AG04450 (cell line): ENCODE measurements at regions of chr3 and their contacts with region 1.

Region 1: GRCh38 chr3:141386611-141387111 is 18.4 kb downstream of the ZBTB38 start:
- DNase-seq: no peak
- H3K4me3 ChIP-seq: peak overlapping the region; percentile 68
- H3K27ac ChIP-seq: peak overlapping the region; percentile 83
- H3K27me3 ChIP-seq: no peaks in the 10 kb centered on the region
- CTCF ChIP-seq: no peak

Region 2: GRCh38 chr3:141311496-141312353 is 74.9 kb before region 1 on chr3:
- CTCF ChIA-PET with region 1: interaction called, 19 read pairs
- POLR2A ChIA-PET with region 1: interaction called, 16 read pairs
- DNase-seq: peak; percentile 95
- H3K4me3 ChIP-seq: peak overlapping the region; percentile 90
- H3K27ac ChIP-seq: peak overlapping the region; percentile 65
- H3K27me3 ChIP-seq: no peaks in the 10 kb centered on the region
- CTCF ChIP-seq: peak; percentile 76

Region 3: DNA sequence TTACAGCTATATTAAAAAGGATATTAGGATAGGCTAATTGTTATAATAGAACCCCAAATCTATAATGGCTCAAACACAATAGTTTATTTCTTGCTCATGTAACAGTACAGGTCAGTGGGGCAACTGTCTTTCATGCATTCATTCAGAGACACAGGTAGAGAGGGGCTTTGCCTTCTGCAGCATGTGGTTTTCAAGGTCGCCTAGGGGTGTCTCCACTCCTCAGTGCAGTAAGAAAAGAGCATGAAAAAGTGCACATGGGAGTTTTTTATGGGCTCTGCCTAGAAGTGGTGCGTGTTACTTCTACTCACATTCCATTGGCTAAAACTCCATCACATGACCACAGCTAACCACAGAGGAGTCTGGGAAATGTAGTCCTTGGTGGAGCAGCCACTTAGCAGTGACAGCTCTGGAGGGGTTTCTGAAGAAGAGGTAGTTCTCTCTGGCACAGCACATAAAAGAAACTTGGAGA is 16.6 kb before region 1 on chr3:
- CTCF ChIA-PET with region 1: interaction called, 8 read pairs
- POLR2A ChIA-PET with region 1: interaction called, 66 read pairs
- DNase-seq: no peak
- H3K4me3 ChIP-seq: no peak overlapping the region; the same call in 1 of the 2 replicates
- H3K27ac ChIP-seq: no peak overlapping the region
- H3K27me3 ChIP-seq: no peaks in the 10 kb centered on the region
- CTCF ChIP-seq: peak; percentile 37

Region 4: GRCh38 chr3:141412087-141412935 is 25.6 kb after region 1 on chr3:
- CTCF ChIA-PET with region 1: no interaction called
- POLR2A ChIA-PET with region 1: interaction called, 38 read pairs
- DNase-seq: peak; percentile 76
- H3K4me3 ChIP-seq: peak overlapping the region; percentile 24; the same call in 1 of the 2 replicates
- H3K27ac ChIP-seq: peak overlapping the region; percentile 94
- H3K27me3 ChIP-seq: no peaks in the 10 kb centered on the region
- CTCF ChIP-seq: no peak

Region 5: GRCh38 chr3:141441381-141442364 is 55.0 kb after region 1 on chr3:
- CTCF ChIA-PET with region 1: no interaction called
- POLR2A ChIA-PET with region 1: interaction called, 14 read pairs
- DNase-seq: peak; percentile 67
- H3K4me3 ChIP-seq: no peak overlapping the region
- H3K27ac ChIP-seq: peak overlapping the region; percentile 83
- H3K27me3 ChIP-seq: no peaks in the 10 kb centered on the region
- CTCF ChIP-seq: peak; percentile 74

Region 6: DNA sequence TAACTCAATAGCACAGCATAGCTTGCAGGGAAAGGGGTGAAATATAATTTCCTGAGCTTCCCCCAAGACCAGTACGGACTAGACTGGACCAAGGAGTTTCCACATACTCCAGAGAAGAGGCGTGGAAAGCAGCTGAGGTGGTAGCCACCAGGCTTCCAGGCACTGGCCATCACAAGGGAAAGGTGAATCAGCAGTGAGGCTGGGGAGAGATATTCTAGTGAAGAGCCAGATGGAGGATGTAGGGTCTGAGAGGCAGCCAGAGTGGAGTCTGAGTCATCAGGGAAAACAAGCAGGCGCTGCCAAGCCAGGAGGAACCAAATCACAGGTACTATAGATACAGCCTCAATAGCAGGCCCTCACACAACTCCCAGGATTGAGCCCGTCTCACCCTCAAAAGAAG is 90.6 kb after region 1 on chr3:
- CTCF ChIA-PET with region 1: no interaction called
- POLR2A ChIA-PET with region 1: no interaction called
- DNase-seq: peak; percentile 52
- H3K4me3 ChIP-seq: no peak overlapping the region
- H3K27ac ChIP-seq: peak overlapping the region; percentile 55
- H3K27me3 ChIP-seq: no peaks in the 10 kb centered on the region
- CTCF ChIP-seq: no peak

Region 7: GRCh38 chr3:141575879-141576743 is 189.4 kb after region 1 on chr3:
- CTCF ChIA-PET with region 1: no interaction called
- POLR2A ChIA-PET with region 1: no interaction called
- DNase-seq: no peak
- H3K4me3 ChIP-seq: no peak overlapping the region
- H3K27ac ChIP-seq: no peak overlapping the region
- H3K27me3 ChIP-seq: no peaks in the 10 kb centered on the region
- CTCF ChIP-seq: peak; percentile 64